Adrenal gland (tissue), 19 donors: ENCODE measurements at regions of chr22 and their contacts with region 1.

Region 1: DNA sequence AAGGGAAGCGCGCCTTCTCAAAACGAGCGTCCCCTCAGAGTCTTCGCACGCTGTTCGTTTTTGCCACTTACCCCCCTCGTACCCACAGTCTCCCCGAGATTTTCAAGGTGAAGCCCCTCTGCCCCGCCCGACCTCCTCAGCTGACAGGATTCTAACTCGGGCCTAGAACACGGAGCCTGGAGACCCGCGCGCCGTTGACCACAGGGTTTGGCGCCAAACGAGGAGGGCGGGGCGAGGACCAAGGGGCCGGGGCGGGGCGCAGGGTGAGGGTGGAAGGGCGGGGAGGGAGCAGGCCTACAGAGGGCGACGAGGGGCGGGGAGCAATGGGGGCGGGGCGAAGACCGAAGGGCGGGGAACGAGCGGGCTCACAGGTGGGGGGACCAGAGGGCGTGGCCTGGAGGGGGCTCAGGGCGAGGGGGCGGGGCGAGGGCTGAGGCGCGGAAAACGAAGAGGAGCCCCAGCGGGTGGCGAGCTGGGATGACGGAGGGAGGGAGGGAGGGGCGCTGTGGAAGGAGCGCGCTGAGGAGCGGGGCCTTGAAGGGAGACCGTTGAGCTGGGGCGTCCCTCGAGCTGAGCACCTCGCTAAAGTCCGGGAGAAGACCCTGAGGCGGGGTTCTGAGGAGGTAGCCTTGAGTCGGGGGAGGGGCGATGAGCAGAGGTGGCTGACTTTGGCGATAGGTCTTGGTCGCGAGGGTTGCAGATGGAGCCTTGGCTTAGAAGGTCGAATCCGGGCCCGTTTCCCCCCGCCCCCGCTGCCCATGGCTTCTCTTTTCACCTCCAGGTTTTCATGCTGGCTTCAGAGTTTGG is at the start of gene DMC1:
- DNase-seq: peak; percentile 87 to 95 (median 93)
- H3K4me3 ChIP-seq: peak within 1 kb of the TSS in 2 of 4 donors; percentile 52 to 64
- H3K27ac ChIP-seq: peak within 1 kb of the TSS in 2 of 5 donors; percentile 55 to 82
- H3K4me1 ChIP-seq: peaks cover 0 to 11% of the 10 kb centered on the region in 2 donors
- H3K27me3 ChIP-seq: no peaks in the 10 kb centered on the region
- CTCF ChIP-seq: no peak
- POLR2A ChIP-seq: peak in 1 of 2 donors; percentile 21
- total RNA-seq, gene DMC1: 0.11 to 28.9 (median 0.83) TPM in 7 of 9 donors, not detected in the others

Region 2: DNA sequence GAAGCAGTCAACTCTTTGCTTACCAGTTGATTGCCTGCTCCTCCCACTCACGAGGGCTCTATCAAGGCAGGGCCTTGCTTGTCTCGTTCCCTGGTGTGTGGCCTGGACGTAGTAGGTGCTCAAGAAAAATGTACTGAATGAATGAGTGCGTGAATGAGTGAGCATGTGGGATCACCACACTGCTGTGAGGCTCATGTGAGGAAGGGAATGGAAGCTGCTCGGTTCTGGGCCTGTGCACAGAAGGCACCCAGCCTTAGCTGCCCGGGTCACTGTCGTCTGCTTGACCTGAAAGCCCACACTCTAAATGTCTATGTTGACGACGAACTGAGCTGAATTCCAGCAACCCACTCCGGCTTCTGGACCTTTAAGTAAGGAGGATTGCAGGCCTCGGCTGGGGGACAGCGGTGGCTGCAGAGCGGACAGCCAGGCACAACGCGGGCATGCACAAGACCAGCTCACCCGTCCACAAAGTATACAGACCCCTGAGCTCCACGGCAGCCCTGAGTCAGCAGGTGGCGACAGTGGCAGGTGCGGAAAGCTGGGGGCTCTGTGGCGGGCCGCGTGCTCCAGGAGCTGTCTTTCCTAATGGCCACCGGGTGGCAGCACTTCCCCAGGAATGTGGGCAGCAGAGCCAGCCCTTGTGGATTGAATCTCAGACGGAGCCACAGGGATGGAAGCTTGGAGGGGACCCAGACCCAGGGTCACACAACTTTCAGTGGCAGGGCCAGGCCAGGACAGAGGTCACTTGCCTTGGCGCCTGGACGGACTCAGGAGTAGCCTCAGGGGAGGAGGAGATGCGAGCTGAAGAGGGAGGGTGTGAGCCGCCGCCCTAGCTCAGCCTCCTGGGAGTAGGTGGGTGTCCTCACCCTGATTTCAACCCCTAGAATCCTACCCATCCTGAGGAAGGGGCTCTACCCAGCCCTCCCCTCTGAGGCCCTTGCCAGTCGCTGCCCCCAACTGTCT is 518.0 kb before region 1 on chr22:
- intact Hi-C with region 1: loop called in 1 of 2 experiments (anchors 5 kb)
- DNase-seq: peak; percentile 68 to 90 (median 83)
- H3K4me3 ChIP-seq: no peak overlapping the region
- H3K27ac ChIP-seq: no peak overlapping the region
- H3K4me1 ChIP-seq: peaks cover 0 to 7% of the 10 kb centered on the region in 2 donors
- H3K27me3 ChIP-seq: no peaks in the 10 kb centered on the region
- CTCF ChIP-seq: peak; percentile 75 to 94 (median 88)
- POLR2A ChIP-seq: no peak

Region 3: DNA sequence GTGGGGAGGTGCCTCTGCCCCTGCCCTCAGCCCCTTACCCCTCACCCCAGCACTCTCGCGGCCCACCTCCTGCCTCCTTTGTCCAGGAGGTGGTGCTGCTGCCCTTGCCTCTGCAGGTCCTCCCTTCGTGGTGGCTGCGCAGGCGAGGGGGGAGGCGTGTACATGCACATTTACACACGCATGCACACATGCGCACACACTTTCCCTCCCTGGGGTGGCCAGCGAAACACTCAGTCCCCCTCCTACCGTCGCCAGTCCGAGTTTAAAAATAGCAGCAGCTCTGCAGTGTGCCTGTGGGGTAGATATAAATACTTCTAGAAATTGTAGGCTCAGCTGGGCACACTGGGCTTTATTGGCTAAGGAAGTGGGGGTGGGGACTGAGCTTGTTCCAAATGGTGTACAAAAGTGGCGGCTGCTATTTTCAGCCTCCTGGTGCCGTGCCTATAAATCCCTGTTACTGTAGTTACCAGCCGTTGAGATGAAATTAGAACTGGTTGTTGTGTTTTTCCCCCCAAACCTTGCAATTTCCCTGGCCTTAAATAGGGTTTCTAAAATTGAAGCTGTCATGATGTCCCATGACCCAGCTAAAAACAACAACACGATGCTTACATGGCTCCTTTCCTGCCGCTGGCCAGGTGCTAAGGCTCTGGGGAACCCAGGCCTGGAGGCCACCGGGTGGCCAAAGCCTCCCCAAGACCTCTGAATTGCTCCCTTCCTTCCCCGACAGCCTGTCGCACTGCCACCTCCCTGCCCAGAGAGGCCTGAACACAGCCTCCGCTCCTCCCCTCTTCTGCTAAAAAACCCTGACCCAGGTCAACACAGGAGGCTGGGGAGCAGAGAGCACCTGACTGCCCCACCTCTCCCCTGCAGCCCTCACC is 500.6 kb before region 1 on chr22:
- intact Hi-C with region 1: loop called in 1 of 2 experiments (anchors 10 kb)
- DNase-seq: peak in 1 of 7 donors; percentile 83
- H3K4me3 ChIP-seq: no peak overlapping the region
- H3K27ac ChIP-seq: peak overlapping the region in 2 of 5 donors; percentile 25 to 65
- H3K4me1 ChIP-seq: no peaks in the 10 kb centered on the region
- H3K27me3 ChIP-seq: no peaks in the 10 kb centered on the region
- CTCF ChIP-seq: peak in 4 of 6 experiments; percentile 12 to 55 (median 38)
- POLR2A ChIP-seq: no peak

Region 4: DNA sequence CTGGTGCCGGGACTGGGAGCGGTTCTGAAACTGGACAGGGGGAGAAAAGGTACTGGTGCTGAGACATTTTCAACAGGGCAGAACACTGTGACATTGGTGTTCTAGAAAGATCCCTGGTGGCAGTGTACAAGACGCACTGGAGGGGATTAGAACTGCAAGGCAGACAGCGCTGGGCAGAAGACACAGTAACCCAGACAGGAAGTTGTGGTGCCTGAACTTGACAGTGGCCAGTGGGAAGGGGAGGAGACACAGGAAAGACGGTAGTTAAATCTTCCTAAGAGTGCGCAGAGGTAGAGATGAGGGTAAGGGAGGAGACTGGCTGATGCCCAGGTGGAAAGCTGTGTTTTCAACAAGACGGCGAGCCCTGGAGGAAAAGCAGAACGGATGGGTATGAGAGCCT is 61.5 kb after region 1 on chr22:
- intact Hi-C with region 1: no loop called
- DNase-seq: no peak
- H3K4me3 ChIP-seq: no peak overlapping the region
- H3K27ac ChIP-seq: no peak overlapping the region
- H3K4me1 ChIP-seq: no peaks in the 10 kb centered on the region
- H3K27me3 ChIP-seq: no peaks in the 10 kb centered on the region
- CTCF ChIP-seq: no peak
- POLR2A ChIP-seq: no peak